Right ventricle myocardium superior (tissue), 1 donor: ENCODE measurements at regions of chr6 and their contacts with region 1.

Region 1: GRCh38 chr6:38871741-38872568 is 156.8 kb downstream of the DNAH8 start:
- DNase-seq: no peak
- ATAC-seq: peak; percentile 61

Region 2: DNA sequence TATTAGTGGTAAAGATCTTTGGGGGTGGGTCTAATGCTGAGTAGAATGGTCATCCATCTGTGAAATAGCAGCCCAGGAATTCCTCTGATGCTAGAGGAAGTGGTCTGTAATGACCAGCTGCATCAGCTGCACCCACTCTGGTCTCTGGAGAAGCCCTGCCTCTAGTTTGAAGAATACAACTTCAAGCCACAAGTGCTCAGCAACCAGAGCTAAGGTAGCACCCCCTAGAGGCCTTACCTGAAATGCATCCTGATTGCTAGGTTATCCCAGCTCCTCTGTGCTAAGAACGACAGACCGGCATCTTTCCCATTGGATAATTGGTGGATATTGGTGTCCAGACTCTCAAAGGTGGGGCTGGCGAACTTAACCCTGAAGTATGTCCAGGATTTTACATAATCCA is 98.6 kb before region 1 on chr6:
- intact Hi-C with region 1: no loop called
- DNase-seq: no peak
- ATAC-seq: no peak

Region 3: DNA sequence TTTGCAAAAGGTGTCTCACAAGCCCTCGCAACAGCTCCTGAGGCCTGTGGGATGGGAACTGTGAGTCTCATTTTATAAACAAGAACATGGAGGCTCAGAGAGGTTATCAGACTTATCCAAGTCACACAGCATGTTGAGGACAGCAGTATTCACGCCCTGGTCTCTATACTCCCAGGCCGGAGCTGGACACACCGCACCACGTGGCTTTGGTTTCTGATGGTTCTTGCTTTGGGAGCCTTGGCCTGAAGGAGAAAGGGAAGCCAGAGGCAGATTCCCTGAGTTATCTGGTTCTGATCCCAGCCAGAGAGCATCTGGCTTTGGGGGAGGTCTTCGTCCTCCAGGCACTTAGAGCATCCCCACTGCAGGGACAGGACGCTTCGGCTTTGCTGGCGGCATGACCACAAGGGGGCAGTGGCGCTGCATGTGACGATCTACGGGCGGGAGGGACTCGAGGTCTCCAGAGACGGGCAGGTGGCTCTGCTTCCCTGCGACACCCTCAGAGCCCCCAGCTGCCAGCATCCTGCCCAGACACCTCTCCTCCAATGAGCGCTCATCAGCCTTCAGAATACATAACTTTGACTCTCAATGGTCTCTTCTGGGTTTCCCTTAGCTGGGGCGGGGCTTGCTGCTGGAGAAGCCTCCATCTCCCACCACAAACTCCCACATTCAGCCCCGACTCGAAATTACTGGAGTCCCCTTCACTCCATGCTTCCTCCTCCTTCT is 294.4 kb after region 1 on chr6:
- intact Hi-C with region 1: loop called (anchors 10 kb)
- DNase-seq: peak; percentile 86
- ATAC-seq: peak; percentile 85

Region 4: DNA sequence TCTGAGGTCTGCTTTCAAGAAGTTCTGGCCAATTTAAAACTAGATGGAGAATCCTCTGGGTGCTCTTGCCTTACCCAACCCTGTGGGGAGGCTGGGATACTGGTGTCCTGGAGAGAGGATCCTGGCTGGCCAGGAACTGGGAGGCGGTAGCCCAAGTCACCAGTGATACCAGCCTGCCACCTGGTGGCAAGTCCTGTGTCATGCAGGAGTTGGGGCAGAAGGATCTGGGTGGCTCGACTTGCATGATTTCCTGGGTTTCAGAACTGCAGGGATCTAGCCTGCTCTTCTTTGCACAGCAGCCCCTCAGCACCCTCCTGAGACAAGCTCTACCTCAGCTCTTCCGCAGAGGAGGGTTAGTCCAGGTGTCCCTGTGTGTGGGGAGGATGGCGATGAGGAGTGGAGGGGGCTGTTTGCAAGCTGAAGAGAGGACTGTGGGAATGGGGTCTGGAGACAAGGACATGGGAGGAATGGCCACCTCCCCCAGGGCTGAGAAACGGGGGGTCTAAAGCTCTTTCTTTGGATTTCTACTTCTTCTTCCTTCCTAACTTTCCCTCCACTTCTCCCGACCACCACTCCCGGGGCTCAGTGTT is 438.1 kb after region 1 on chr6:
- intact Hi-C with region 1: loop called (anchors 5 kb)
- DNase-seq: peak; percentile 80
- ATAC-seq: peak; percentile 89